Psoas muscle (tissue), 8 donors: ENCODE measurements at regions of chr20 and their contacts with region 1.

Region 1: DNA sequence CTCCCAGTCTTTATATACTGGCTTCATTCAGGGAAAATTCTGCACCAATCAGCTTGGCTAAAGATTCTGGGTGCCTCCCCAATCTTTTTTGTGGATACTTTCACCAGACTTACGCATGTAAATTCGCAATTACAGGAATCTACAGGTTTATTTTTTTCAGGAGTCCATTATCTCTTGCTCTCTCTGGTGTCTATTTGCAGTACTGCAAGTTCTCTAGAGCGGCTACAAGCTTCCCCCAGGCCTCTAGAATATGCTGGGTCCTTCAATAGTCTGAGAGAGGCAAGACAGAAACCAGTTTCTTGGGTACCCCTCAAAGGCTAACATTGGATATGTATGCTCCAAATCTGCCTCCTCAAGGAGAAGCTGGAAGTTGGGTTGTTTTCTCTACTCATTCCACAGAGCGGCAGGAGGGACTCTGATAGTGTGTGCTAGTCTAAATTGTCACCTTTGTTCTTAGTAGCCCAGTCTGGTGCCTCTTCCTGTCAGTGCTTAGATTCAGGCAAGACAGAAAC is 58.5 kb downstream of the SUN5 start:
- DNase-seq: no peak
- ATAC-seq: no peak
- H3K4me3 ChIP-seq: no peak overlapping the region
- H3K27ac ChIP-seq: no peak overlapping the region
- H3K4me1 ChIP-seq: no peaks in the 10 kb centered on the region
- H3K27me3 ChIP-seq: peaks cover 0 to 9% (median 4%) of the 10 kb centered on the region in 3 donors
- CTCF ChIP-seq: peak; percentile 40

Region 2: GRCh38 chr20:32789896-32790750 is 155.6 kb before region 1 on chr20:
- intact Hi-C with region 1: loop called in 1 of 2 experiments (anchors 2 kb)
- DNase-seq: peak; percentile 63 to 84
- ATAC-seq: peak; percentile 85 to 93 (median 86)
- H3K4me3 ChIP-seq: no peak overlapping the region
- H3K27ac ChIP-seq: no peak overlapping the region
- H3K4me1 ChIP-seq: peaks cover 12% of the 10 kb centered on the region
- H3K27me3 ChIP-seq: no peaks in the 10 kb centered on the region
- CTCF ChIP-seq: peak; percentile 99

Region 3: DNA sequence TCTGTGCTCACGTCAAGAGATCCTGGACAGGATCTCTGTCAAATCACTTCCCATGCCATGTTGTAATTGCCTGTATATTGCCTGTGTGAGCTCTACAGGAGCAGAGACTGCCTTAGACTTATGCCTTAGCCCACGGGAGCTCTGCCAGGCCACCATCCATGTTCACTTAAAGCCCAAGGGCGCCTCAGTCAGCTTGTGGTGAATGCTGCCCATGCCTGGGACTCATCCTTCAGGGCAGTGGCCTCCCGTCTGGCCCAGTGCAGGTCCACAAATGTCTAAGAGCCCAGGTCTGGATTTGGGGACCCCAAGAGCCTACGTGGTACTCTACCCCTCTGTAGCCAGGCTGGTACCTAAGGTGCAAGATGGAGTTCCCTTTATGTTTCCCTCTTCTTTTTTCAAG is 199.8 kb after region 1 on chr20:
- intact Hi-C with region 1: no loop called
- DNase-seq: no peak
- ATAC-seq: no peak
- H3K4me3 ChIP-seq: no peak overlapping the region
- H3K27ac ChIP-seq: no peak overlapping the region
- H3K4me1 ChIP-seq: no peaks in the 10 kb centered on the region
- H3K27me3 ChIP-seq: peaks cover 0 to 2% (median 0%) of the 10 kb centered on the region in 3 donors
- CTCF ChIP-seq: no peak